CD4-positive, alpha-beta T cell (primary cell): ENCODE measurements at regions of chr1 and their contacts with region 1.

Region 1: GRCh38 chr1:44674113-44675000 is at the starts of genes ARMH1 and TMEM53:
- DNase-seq: peak; percentile 91 to 99 (median 96)
- ATAC-seq: peak; percentile 90
- H3K4me3 ChIP-seq: peak within 1 kb of the TSS; percentile 86
- H3K4me3 Mint-ChIP-seq: peak within 1 kb of the TSS; percentile 93
- H3K27ac ChIP-seq: peak within 1 kb of the TSS; percentile 75 to 86
- H3K27ac Mint-ChIP-seq: peak within 1 kb of the TSS; percentile 84
- H3K4me1 ChIP-seq: peaks cover 31% of the 10 kb centered on the region
- H3K4me1 Mint-ChIP-seq: peaks cover 29% of the 10 kb centered on the region
- H3K27me3 ChIP-seq: no peaks in the 10 kb centered on the region
- H3K27me3 Mint-ChIP-seq: no peaks in the 10 kb centered on the region
- CTCF ChIP-seq: no peak
- total RNA-seq, gene ARMH1: 79.9 to 84.0 TPM
- total RNA-seq, gene TMEM53: 0.64 to 1.2 TPM

Region 2: GRCh38 chr1:44354840-44355581 is 319.3 kb before region 1 on chr1 and contains the start of gene ERI3:
- CTCF ChIA-PET with region 1: no interaction called
- POLR2A ChIA-PET with region 1: no interaction called
- intact Hi-C with region 1: loop called in 1 of 2 experiments (anchors 10 kb)
- DNase-seq: peak; percentile 93 to 98 (median 95)
- ATAC-seq: peak; percentile 100
- H3K4me3 ChIP-seq: peak within 1 kb of the TSS; percentile 80
- H3K4me3 Mint-ChIP-seq: peak within 1 kb of the TSS; percentile 94
- H3K27ac ChIP-seq: peak within 1 kb of the TSS in 1 of 2 donors; percentile 29
- H3K27ac Mint-ChIP-seq: peak within 1 kb of the TSS; percentile 63
- H3K4me1 ChIP-seq: peaks cover 19% of the 10 kb centered on the region
- H3K4me1 Mint-ChIP-seq: peaks cover 45% of the 10 kb centered on the region
- H3K27me3 ChIP-seq: no peaks in the 10 kb centered on the region
- H3K27me3 Mint-ChIP-seq: no peaks in the 10 kb centered on the region
- CTCF ChIP-seq: no peak
- total RNA-seq, gene ERI3: 19.7 to 20.7 TPM

Region 3: GRCh38 chr1:44696789-44697345 is 22.5 kb after region 1 on chr1:
- CTCF ChIA-PET with region 1: no interaction called
- POLR2A ChIA-PET with region 1: interaction called, 16 read pairs
- intact Hi-C with region 1: no loop called
- DNase-seq: peak in 12 of 14 experiments; percentile 8 to 65 (median 36)
- ATAC-seq: peak; percentile 98
- H3K4me3 ChIP-seq: peak overlapping the region; percentile 5
- H3K4me3 Mint-ChIP-seq: peak overlapping the region; percentile 70
- H3K27ac ChIP-seq: peak overlapping the region; percentile 36 to 74
- H3K27ac Mint-ChIP-seq: peak overlapping the region; percentile 84
- H3K4me1 ChIP-seq: peaks cover 16% of the 10 kb centered on the region
- H3K4me1 Mint-ChIP-seq: peaks cover 14% of the 10 kb centered on the region
- H3K27me3 ChIP-seq: no peaks in the 10 kb centered on the region
- H3K27me3 Mint-ChIP-seq: no peaks in the 10 kb centered on the region
- CTCF ChIP-seq: no peak

Region 4: DNA sequence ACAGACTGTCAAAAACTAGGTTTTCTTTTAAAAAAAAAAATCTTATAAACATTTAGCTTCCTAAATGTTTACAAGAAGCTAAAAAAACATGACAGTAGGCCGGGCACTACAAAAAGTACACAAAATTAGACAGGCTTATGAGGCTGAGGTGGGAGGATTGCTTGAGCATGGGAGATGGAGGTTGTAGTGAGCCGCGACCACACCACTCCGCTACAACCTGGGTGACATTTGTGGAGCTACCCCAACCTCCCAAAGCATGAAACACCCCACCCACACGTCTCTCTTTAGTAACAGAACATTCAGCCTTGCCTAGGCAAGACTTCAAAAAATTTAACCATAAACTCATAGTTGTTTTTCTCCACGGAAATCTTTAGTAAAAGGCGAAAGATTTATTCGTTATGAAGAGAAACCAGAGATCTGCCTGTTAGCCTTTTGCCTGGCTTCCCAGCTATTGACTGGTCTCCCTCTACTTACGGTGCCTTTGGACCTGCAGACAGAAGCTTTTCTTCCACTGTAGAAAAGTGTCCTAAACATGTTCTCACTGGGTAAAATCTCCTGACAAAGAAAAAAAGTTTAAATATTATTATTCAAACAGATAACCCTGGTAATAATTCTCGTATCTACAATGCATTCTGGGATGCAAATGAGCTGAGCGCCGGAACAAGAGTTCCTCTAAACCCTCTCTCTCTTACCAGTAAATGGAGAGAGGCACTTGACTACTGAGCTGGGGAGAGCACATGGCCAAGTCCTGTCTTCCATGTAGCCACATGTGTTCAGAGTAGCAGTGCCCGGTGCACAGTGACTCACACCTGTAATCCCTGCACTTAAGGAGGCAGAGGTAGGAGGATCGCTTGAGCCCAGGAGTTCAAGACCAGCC is 47.4 kb after region 1 on chr1:
- CTCF ChIA-PET with region 1: no interaction called
- POLR2A ChIA-PET with region 1: interaction called, 20 read pairs
- intact Hi-C with region 1: no loop called
- DNase-seq: peak; percentile 16 to 93 (median 48)
- ATAC-seq: peak; percentile 75
- H3K4me3 ChIP-seq: peak overlapping the region; percentile 6
- H3K4me3 Mint-ChIP-seq: peak overlapping the region; percentile 84
- H3K27ac ChIP-seq: peak overlapping the region; percentile 30 to 76
- H3K27ac Mint-ChIP-seq: peak overlapping the region; percentile 90
- H3K4me1 ChIP-seq: peaks cover 77% of the 10 kb centered on the region
- H3K4me1 Mint-ChIP-seq: peaks cover 68% of the 10 kb centered on the region
- H3K27me3 ChIP-seq: no peaks in the 10 kb centered on the region
- H3K27me3 Mint-ChIP-seq: no peaks in the 10 kb centered on the region
- CTCF ChIP-seq: no peak

Region 5: GRCh38 chr1:44730741-44731512 is 56.6 kb after region 1 on chr1 and contains the start of gene RNU5D-1:
- CTCF ChIA-PET with region 1: no interaction called
- POLR2A ChIA-PET with region 1: interaction called, 3 read pairs
- intact Hi-C with region 1: loop called in 1 of 2 experiments (anchors 2 kb)
- DNase-seq: peak; percentile 87 to 98 (median 94)
- ATAC-seq: peak; percentile 76
- H3K4me3 ChIP-seq: peak within 1 kb of the TSS; percentile 46
- H3K4me3 Mint-ChIP-seq: peak within 1 kb of the TSS; percentile 68
- H3K27ac ChIP-seq: peak within 1 kb of the TSS; percentile 93 to 96
- H3K27ac Mint-ChIP-seq: peak within 1 kb of the TSS; percentile 97
- H3K4me1 ChIP-seq: peaks cover 33% of the 10 kb centered on the region
- H3K4me1 Mint-ChIP-seq: peaks cover 35% of the 10 kb centered on the region
- H3K27me3 ChIP-seq: no peaks in the 10 kb centered on the region
- H3K27me3 Mint-ChIP-seq: no peaks in the 10 kb centered on the region
- CTCF ChIP-seq: peak; percentile 77
- total RNA-seq, gene RNU5D-1: not detected

Region 6: DNA sequence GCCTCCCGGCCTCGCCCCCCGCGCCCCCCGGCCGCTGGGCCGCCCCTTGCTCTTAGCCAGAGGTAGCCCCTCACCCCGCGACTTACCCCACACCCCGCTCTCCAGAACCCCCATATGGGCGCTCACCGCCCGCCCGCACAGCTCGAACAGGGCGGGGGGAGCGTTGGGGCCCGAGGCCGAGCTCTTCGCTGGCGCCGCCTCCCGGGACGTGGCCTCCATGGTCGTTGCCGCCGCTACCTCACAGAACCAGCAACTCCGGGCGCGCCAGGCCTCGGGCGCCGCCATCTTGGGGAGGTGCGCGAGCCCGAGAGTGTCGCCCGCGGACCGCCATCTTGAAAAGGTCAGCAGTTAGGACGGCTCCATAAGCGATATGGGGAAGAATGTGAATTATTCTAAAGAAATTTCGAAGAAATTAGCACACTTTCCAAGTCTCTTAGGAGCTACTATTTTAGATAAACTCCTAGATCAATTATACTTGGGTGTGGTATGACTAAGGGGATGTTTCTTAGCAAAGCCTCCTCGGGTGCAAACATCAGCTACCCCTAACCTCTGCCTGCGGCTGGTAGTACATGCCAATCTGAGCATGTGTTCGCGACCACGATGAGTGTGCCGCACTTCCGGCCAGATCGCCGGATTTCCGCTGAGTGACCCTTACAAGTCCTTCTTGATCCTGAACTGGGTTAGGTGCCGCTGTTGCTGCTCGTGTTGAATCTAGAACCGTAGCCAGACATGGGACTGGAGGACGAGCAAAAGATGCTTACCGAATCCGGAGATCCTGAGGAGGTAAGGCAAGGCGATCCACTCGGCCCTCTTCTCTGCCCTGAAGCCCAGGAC is 1628.9 kb after region 1 on chr1 and contains the starts of genes LRRC41 and UQCRH:
- CTCF ChIA-PET with region 1: no interaction called
- POLR2A ChIA-PET with region 1: no interaction called
- intact Hi-C with region 1: loop called in 1 of 2 experiments (anchors 10 kb)
- DNase-seq: peak; percentile 89 to 97 (median 92)
- ATAC-seq: peak; percentile 89
- H3K4me3 ChIP-seq: peak within 1 kb of the TSS; percentile 98
- H3K4me3 Mint-ChIP-seq: peak within 1 kb of the TSS; percentile 100
- H3K27ac ChIP-seq: peak within 1 kb of the TSS; percentile 69 to 91
- H3K27ac Mint-ChIP-seq: peak within 1 kb of the TSS; percentile 98
- H3K4me1 ChIP-seq: peaks cover 60% of the 10 kb centered on the region
- H3K4me1 Mint-ChIP-seq: peaks cover 58% of the 10 kb centered on the region
- H3K27me3 ChIP-seq: no peaks in the 10 kb centered on the region
- H3K27me3 Mint-ChIP-seq: no peaks in the 10 kb centered on the region
- CTCF ChIP-seq: no peak
- total RNA-seq, gene LRRC41: 23.0 to 24.3 TPM
- total RNA-seq, gene UQCRH: 101 to 103 TPM